Natural killer cell (primary cell): ENCODE measurements at regions of chr4 and their contacts with region 1.

Region 1: GRCh38 chr4:73653695-73654106 is 33.5 kb upstream of the RASSF6 start:
- DNase-seq: peak in 1 of 2 donors; percentile 62
- ATAC-seq: peak in 1 of 3 donors; percentile 57
- H3K4me3 ChIP-seq: no peak overlapping the region
- H3K4me3 Mint-ChIP-seq: no peak overlapping the region
- H3K27ac ChIP-seq: no peak overlapping the region
- H3K27ac Mint-ChIP-seq: no peak overlapping the region
- H3K4me1 ChIP-seq: no peaks in the 10 kb centered on the region
- H3K4me1 Mint-ChIP-seq: no peaks in the 10 kb centered on the region
- H3K27me3 ChIP-seq: no peaks in the 10 kb centered on the region
- H3K27me3 Mint-ChIP-seq: no peaks in the 10 kb centered on the region
- CTCF ChIP-seq: peak; percentile 49

Region 2: GRCh38 chr4:72701987-72702819 is 951.5 kb before region 1 on chr4:
- intact Hi-C with region 1: loop called (anchors 5 kb)
- DNase-seq: peak in 1 of 2 donors; percentile 58
- ATAC-seq: peak in 1 of 3 donors; percentile 53
- H3K4me3 ChIP-seq: peak overlapping the region; percentile 15
- H3K4me3 Mint-ChIP-seq: peak overlapping the region; percentile 66
- H3K27ac ChIP-seq: no peak overlapping the region
- H3K27ac Mint-ChIP-seq: no peak overlapping the region
- H3K4me1 ChIP-seq: no peaks in the 10 kb centered on the region
- H3K4me1 Mint-ChIP-seq: no peaks in the 10 kb centered on the region
- H3K27me3 ChIP-seq: no peaks in the 10 kb centered on the region
- H3K27me3 Mint-ChIP-seq: no peaks in the 10 kb centered on the region
- CTCF ChIP-seq: peak; percentile 31

Region 3: DNA sequence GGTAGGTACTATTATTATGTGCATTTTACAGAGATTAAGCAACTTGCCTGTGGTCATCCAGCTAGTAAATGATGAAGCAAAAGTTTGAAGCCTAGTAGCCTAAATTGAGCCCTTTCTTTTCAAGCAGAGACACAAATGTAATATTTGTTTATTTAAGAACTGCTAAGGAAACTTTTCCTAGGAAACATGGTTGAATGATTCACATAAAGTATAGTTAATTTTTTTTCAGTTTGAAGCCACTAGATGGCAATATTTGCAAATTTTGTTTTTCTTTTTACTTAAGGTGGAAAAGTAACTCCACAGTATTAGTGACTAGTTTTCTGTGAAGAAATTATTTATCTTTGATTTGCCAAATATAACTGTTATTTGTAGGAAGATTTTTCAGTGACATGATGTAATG is 342.3 kb before region 1 on chr4:
- intact Hi-C with region 1: loop called (anchors 5 kb)
- DNase-seq: no peak
- ATAC-seq: no peak
- H3K4me3 ChIP-seq: no peak overlapping the region
- H3K4me3 Mint-ChIP-seq: no peak overlapping the region
- H3K27ac ChIP-seq: no peak overlapping the region
- H3K27ac Mint-ChIP-seq: no peak overlapping the region
- H3K4me1 ChIP-seq: no peaks in the 10 kb centered on the region
- H3K4me1 Mint-ChIP-seq: no peaks in the 10 kb centered on the region
- H3K27me3 ChIP-seq: no peaks in the 10 kb centered on the region
- H3K27me3 Mint-ChIP-seq: no peaks in the 10 kb centered on the region
- CTCF ChIP-seq: no peak

Region 4: DNA sequence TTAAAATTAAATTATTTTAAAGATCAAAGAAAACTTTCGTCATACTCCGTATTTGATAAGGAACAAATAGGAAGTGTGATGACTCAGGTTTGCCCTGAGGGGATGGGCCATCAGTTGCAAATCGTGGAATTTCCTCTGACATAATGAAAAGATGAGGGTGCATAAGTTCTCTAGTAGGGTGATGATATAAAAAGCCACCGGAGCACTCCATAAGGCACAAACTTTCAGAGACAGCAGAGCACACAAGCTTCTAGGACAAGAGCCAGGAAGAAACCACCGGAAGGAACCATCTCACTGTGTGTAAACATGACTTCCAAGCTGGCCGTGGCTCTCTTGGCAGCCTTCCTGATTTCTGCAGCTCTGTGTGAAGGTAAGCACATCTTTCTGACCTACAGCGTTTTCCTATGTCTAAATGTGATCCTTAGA is 86.7 kb after region 1 on chr4 and contains the start of gene CXCL8:
- intact Hi-C with region 1: no loop called
- DNase-seq: peak in 1 of 2 donors; percentile 14
- ATAC-seq: peak in 2 of 3 donors; percentile 39 to 80
- H3K4me3 ChIP-seq: no peak within 1 kb of the TSS
- H3K4me3 Mint-ChIP-seq: no peak within 1 kb of the TSS
- H3K27ac ChIP-seq: no peak within 1 kb of the TSS
- H3K27ac Mint-ChIP-seq: no peak within 1 kb of the TSS
- H3K4me1 ChIP-seq: no peaks in the 10 kb centered on the region
- H3K4me1 Mint-ChIP-seq: no peaks in the 10 kb centered on the region
- H3K27me3 ChIP-seq: no peaks in the 10 kb centered on the region
- H3K27me3 Mint-ChIP-seq: no peaks in the 10 kb centered on the region
- CTCF ChIP-seq: no peak
- total RNA-seq, gene CXCL8: 59.5 to 460 (median 81.1) TPM